ENCODE measurements at regions of chrX and their contacts with region 1.

Region 1: DNA sequence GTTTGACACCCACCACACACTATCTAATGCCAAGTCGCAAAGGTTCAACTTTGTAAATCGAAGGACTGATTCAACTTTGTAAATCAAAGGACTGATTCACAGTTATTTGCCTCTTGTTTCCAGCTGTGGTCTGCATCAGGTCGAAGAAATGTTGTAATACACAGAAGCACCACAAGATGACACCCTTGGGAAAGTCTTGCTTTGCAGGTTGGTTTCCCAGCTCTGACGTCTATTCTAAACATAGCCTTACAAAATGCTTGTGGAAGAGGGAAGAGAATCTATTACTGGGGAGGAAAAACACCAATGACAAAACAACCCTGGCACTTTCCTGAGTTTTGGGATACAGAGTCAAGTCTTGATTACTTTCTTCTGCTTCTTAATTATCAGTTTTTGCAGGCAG is 35.3 kb downstream of the SUPT20HL1 start:
- DNase-seq: peak; percentile 19
- H3K4me3 ChIP-seq: no peak overlapping the region
- H3K27me3 ChIP-seq: no peaks in the 10 kb centered on the region; the same call in none of the 2 replicates
- CTCF ChIP-seq: peak; percentile 66

Region 2: DNA sequence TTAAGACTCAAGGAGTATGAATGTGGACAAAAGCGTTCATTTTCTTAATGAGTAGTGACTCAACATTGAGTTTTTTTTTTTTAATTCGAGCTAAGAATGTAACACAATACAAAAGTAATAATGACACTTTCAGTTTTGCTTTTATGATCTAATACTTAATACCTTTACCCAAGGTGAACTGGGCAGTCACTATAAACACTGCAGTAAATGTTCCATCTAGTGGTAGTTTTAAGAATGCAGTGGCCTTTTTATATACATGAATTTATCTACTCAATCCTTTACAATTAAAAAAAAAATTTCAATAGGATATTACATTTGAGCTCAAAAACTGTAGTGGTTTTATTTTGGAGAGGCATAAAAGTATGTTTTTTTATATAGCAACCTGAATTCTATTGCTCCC is 103.2 kb after region 1 on chrX:
- CTCF ChIA-PET with region 1: interaction called, 25 read pairs
- POLR2A ChIA-PET with region 1: no interaction called
- DNase-seq: no peak
- H3K4me3 ChIP-seq: no peak overlapping the region
- H3K27me3 ChIP-seq: no peaks in the 10 kb centered on the region
- CTCF ChIP-seq: peak; percentile 41